MCF 10A (cell line): ENCODE measurements at regions of chr6 and their contacts with region 1.

Region 1: DNA sequence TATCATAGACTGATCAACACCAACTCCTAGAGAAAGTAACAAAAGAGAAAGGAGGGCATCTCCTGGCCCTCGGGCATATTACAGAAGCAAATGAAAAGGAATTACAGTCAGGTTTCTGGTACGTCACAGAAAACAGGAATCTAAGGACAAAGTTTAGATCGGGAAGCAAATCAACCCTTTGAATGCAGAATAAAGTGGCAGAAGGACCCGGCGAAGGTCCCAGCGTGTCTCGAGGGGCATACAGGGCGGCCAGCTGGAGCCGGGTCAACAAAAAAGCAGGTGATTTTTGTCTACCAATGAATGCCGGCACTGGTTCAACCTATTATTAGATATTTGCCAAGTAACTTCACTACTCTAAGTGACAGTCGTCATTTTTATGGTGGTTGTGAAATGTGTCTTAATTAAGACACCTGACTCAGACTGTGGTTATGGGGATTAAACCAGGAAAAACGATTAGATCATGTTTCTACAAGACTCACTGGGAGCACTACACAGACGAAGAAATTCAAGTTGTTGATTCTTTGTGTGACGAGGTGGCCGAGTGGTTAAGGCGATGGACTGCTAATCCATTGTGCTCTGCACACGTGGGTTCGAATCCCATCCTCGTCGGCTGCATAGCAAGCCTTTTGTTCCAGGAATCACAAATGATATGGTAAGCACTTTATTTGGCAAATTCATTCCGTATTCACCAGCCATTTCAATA is 12.4 kb upstream of the ZSCAN9 start:
- DNase-seq: peak; percentile 90
- H3K4me3 Mint-ChIP-seq: peak overlapping the region; percentile 72
- H3K27ac Mint-ChIP-seq: peak overlapping the region; percentile 85
- H3K4me1 Mint-ChIP-seq: peaks cover 14% of the 10 kb centered on the region
- H3K27me3 Mint-ChIP-seq: no peaks in the 10 kb centered on the region
- CTCF ChIP-seq: no peak

Region 2: GRCh38 chr6:27902335-27903314 is 310.0 kb before region 1 on chr6:
- CTCF ChIA-PET with region 1: no interaction called
- POLR2A ChIA-PET with region 1: no interaction called
- intact Hi-C with region 1: loop called (anchors 2 kb)
- DNase-seq: peak; percentile 89
- H3K4me3 Mint-ChIP-seq: peak overlapping the region; percentile 78
- H3K27ac Mint-ChIP-seq: peak overlapping the region; percentile 81
- H3K4me1 Mint-ChIP-seq: peaks cover 5% of the 10 kb centered on the region
- H3K27me3 Mint-ChIP-seq: no peaks in the 10 kb centered on the region
- CTCF ChIP-seq: no peak

Region 3: DNA sequence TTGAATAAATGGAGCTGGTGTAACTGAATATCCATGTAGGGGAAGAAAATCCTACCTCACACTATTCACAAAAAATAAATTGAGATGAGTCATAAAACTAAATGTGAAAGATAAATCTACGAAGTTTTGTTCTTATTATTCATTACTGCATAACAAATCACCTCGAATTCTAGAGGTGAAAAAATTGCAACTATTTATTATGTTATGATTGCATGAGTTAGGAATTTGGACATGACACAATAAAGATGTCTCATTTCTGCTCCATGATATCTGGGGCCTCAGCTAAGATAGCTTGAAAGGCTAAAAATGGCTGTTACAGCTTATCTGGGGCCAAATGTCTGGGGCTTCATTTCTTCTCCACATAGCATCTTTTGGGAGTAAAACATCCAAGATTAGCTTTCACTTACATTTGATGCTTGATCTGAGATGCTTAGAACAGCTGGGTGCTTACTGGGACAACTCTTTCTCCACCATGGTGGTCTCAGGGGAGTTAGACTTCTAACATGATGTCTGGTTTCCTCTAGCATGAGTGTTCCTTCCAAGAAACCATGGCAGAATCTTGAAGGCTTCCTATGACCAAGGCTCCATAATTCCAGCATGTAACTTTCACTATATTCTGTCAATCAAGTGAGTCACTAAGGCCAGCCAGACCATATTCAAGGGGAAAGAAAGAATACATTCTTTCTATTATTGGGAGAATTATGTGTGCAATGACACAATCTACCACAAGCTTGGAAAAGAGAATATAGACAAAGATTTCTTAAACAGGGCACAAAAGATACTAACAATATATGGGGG is 225.5 kb before region 1 on chr6:
- CTCF ChIA-PET with region 1: no interaction called
- POLR2A ChIA-PET with region 1: no interaction called
- intact Hi-C with region 1: no loop called
- DNase-seq: peak; percentile 23
- H3K4me3 Mint-ChIP-seq: no peak overlapping the region
- H3K27ac Mint-ChIP-seq: no peak overlapping the region
- H3K4me1 Mint-ChIP-seq: peaks cover 5% of the 10 kb centered on the region
- H3K27me3 Mint-ChIP-seq: peaks cover 20% of the 10 kb centered on the region
- CTCF ChIP-seq: no peak

Region 4: DNA sequence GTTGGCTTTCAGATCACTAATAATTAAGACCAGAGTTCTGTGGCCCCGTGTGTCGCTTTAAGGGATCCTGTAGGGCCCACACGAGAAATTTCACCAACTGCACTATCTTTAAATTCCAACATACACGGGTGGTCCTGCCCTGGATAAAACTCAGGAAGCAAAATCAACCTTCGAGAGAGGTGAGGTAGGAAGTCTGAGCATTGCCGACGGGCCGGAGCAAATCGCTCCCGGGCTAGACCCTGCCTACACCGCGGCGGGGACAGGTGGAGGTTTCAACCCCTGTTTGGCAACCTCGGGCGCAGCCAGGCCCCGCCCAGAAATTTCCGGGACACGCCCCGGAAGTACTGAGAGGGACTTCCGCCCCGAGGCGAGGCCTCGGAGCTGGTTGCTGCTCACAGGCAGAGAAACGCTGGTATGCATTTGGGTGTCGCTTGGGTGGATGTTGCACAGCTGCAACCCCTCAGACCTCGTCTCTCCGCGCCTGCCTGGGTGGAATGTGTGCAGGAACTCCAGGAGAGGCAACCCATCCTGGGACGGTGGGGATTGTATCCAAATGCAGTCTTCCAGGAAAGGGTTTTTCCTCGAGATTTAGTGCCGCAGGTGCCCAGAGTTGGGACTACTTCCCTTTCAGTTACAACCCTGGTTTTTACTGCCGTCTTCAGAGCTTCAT is 51.1 kb before region 1 on chr6:
- CTCF ChIA-PET with region 1: interaction called, 3 read pairs
- POLR2A ChIA-PET with region 1: interaction called, 4 read pairs
- intact Hi-C with region 1: loop called (anchors 2 kb)
- DNase-seq: peak; percentile 83
- H3K4me3 Mint-ChIP-seq: peak overlapping the region; percentile 85
- H3K27ac Mint-ChIP-seq: peak overlapping the region; percentile 85
- H3K4me1 Mint-ChIP-seq: peaks cover 12% of the 10 kb centered on the region
- H3K27me3 Mint-ChIP-seq: no peaks in the 10 kb centered on the region
- CTCF ChIP-seq: no peak

Region 5: GRCh38 chr6:28710466-28711191 is 498.0 kb after region 1 on chr6:
- CTCF ChIA-PET with region 1: no interaction called
- POLR2A ChIA-PET with region 1: no interaction called
- intact Hi-C with region 1: no loop called
- DNase-seq: peak; percentile 59
- H3K4me3 Mint-ChIP-seq: peak overlapping the region; percentile 58
- H3K27ac Mint-ChIP-seq: no peak overlapping the region
- H3K4me1 Mint-ChIP-seq: no peaks in the 10 kb centered on the region
- H3K27me3 Mint-ChIP-seq: no peaks in the 10 kb centered on the region
- CTCF ChIP-seq: no peak